IMR-90 (cell line): ENCODE measurements at regions of chr19 and their contacts with region 1.

Region 1: GRCh38 chr19:18985257-18985656 is 44.2 kb upstream of the HOMER3 start:
- DNase-seq: no peak
- ATAC-seq: no peak
- H3K4me3 ChIP-seq: no peak overlapping the region
- H3K27ac ChIP-seq: no peak overlapping the region
- H3K4me1 ChIP-seq: no peaks in the 10 kb centered on the region
- H3K27me3 ChIP-seq: peaks cover 14% of the 10 kb centered on the region
- CTCF ChIP-seq: no peak
- POLR2A ChIP-seq: no peak
- RAD21 ChIP-seq: no peak

Region 2: DNA sequence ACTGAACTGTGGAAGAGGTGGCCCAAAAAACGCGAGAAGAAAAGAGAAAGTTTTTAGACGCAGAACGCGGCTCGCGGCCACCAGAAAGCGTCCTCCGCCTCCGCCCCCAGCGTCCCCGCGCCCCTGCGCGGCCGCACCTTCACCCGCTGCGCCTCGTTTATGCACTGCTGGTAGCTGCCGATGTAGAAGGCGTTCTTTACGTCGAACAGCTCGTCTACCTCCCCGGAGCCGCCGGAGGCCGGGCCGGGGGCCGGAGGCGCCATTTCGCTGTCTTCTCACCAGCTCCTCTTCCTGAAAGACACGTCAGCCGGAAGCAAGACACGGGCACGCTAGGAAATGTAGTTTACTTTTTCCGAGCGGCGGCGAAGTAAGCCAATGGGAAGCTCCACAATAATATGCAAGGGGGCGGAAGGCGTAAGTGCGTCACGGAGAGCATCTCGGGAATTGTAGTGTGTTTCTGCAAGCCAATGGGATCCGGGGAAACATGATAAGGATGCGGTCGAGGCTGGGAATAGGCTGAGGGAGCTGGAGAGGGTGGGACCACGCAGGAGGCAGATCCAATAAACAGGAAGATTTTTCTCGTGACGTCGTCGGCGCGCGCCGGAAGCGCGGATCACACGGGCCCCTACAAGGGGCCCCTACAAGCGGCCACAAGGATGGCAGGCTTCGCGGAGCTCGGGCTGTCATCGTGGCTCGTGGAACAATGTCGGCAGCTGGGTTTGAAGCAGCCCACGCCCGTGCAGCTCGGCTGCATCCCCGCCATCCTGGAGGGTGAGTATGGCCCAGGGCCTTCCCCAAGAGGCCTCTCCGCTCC is 66.0 kb before region 1 on chr19 and contains the starts of genes COPE and DDX49:
- CTCF ChIA-PET with region 1: no interaction called
- POLR2A ChIA-PET with region 1: no interaction called
- dilution Hi-C with region 1: no loop called
- in situ Hi-C with region 1: no loop called
- intact Hi-C with region 1: loop called (anchors 2 kb)
- DNase-seq: peak; percentile 100
- ATAC-seq: peak; percentile 98
- H3K4me3 ChIP-seq: peak within 1 kb of the TSS; percentile 72
- H3K27ac ChIP-seq: peak within 1 kb of the TSS; percentile 83
- H3K4me1 ChIP-seq: peaks cover 5% of the 10 kb centered on the region
- H3K27me3 ChIP-seq: no peaks in the 10 kb centered on the region
- CTCF ChIP-seq: no peak
- POLR2A ChIP-seq: peak; percentile 96
- RAD21 ChIP-seq: no peak
- total RNA-seq, gene COPE: 310 and 347 TPM in 2 replicates
- total RNA-seq, gene DDX49: 50.9 and 55.8 TPM in 2 replicates

Region 3: DNA sequence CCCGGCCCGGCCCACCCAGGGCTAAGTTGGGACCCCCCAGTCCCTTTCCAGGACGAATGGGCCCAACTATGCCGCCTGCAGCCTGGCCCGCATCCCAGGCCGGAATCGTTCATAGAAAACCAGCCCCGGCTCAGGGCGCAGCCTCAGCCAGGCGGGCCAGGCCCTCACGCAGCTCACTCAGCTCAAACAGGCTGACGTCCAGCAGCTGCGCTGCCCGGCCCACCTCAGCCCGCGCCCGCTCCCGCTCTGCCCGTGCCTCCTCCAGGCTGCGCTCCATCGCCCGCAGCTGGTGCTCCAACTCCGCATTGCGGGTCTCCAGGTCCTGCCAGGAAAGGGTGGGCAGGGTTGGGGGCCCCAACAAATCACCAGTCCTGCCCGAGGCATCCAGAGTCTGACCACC is 55.9 kb before region 1 on chr19:
- CTCF ChIA-PET with region 1: no interaction called
- POLR2A ChIA-PET with region 1: no interaction called
- dilution Hi-C with region 1: no loop called
- in situ Hi-C with region 1: no loop called
- intact Hi-C with region 1: no loop called
- DNase-seq: no peak
- ATAC-seq: no peak
- H3K4me3 ChIP-seq: no peak overlapping the region
- H3K27ac ChIP-seq: no peak overlapping the region
- H3K4me1 ChIP-seq: no peaks in the 10 kb centered on the region
- H3K27me3 ChIP-seq: no peaks in the 10 kb centered on the region
- CTCF ChIP-seq: no peak
- POLR2A ChIP-seq: no peak
- RAD21 ChIP-seq: no peak

Region 4: GRCh38 chr19:18940769-18941407 is 44.4 kb before region 1 on chr19 and contains the start of gene HOMER3:
- CTCF ChIA-PET with region 1: interaction called, 3 read pairs
- POLR2A ChIA-PET with region 1: no interaction called
- dilution Hi-C with region 1: no loop called
- in situ Hi-C with region 1: loop called (anchors 5 kb)
- intact Hi-C with region 1: loop called (anchors 1 kb)
- DNase-seq: peak; percentile 39
- ATAC-seq: peak; percentile 84
- H3K4me3 ChIP-seq: peak within 1 kb of the TSS; percentile 73
- H3K27ac ChIP-seq: peak within 1 kb of the TSS; percentile 74
- H3K4me1 ChIP-seq: peaks cover 6% of the 10 kb centered on the region
- H3K27me3 ChIP-seq: no peaks in the 10 kb centered on the region
- CTCF ChIP-seq: peak; percentile 48
- POLR2A ChIP-seq: peak; percentile 51; the same call in 1 of the 2 replicates
- RAD21 ChIP-seq: peak; percentile 7; the same call in 1 of the 2 replicates
- total RNA-seq, gene HOMER3: 50.8 and 53.4 TPM in 2 replicates

Region 5: GRCh38 chr19:18975011-18975410 is 10.2 kb before region 1 on chr19:
- CTCF ChIA-PET with region 1: interaction called, 3 read pairs
- POLR2A ChIA-PET with region 1: interaction called, 14 read pairs
- dilution Hi-C with region 1: no loop called
- in situ Hi-C with region 1: no loop called
- intact Hi-C with region 1: no loop called
- DNase-seq: peak; percentile 62
- ATAC-seq: no peak; the same call in 1 of the 2 replicates
- H3K4me3 ChIP-seq: no peak overlapping the region
- H3K27ac ChIP-seq: no peak overlapping the region
- H3K4me1 ChIP-seq: peaks cover 8% of the 10 kb centered on the region
- H3K27me3 ChIP-seq: no peaks in the 10 kb centered on the region
- CTCF ChIP-seq: no peak
- POLR2A ChIP-seq: no peak
- RAD21 ChIP-seq: no peak